ENCODE measurements at regions of chr4 and their contacts with region 1.

Region 1: GRCh38 chr4:2412885-2413716 is 5.3 kb downstream of the ZFYVE28 start:
- DNase-seq: peak; percentile 55 to 94 (median 88)
- ATAC-seq: peak; percentile 74 to 79
- H3K4me3 Mint-ChIP-seq: peak overlapping the region; percentile 69 to 88 (median 82)
- H3K27ac Mint-ChIP-seq: peak overlapping the region; percentile 91 to 99 (median 96)
- H3K4me1 Mint-ChIP-seq: peaks cover 33 to 72% (median 68%) of the 10 kb centered on the region in 4 donors
- H3K27me3 Mint-ChIP-seq: peaks cover 0 to 14% (median 5%) of the 10 kb centered on the region in 5 donors

Region 2: DNA sequence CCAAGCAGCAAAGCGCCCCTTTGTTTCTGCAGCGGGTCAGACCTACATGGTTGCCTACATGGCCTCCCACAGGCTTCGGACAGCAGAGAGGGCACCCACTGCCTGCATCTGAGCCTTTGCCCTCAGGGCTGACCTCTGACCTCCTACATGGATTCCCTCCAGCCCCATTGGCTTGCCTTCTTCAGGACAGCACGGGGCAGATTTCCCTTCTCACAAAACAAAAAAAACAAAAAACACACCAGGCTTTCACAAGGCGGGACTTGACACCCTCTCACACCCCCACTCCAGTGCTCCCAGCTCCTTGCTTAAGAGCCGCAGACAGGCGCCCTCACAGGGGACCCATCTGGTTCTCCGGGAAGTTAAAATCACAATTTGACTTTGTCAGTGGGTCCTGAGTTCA is 27.6 kb before region 1 on chr4:
- POLR2A ChIA-PET with region 1: no interaction called
- DNase-seq: no peak
- ATAC-seq: no peak
- H3K4me3 Mint-ChIP-seq: no peak overlapping the region
- H3K27ac Mint-ChIP-seq: peak overlapping the region in 4 of 10 donors; percentile 61 to 83 (median 66)
- H3K4me1 Mint-ChIP-seq: peaks cover 0 to 12% (median 3%) of the 10 kb centered on the region in 4 donors
- H3K27me3 Mint-ChIP-seq: peaks cover 0 to 20% (median 2%) of the 10 kb centered on the region in 5 donors

Region 3: DNA sequence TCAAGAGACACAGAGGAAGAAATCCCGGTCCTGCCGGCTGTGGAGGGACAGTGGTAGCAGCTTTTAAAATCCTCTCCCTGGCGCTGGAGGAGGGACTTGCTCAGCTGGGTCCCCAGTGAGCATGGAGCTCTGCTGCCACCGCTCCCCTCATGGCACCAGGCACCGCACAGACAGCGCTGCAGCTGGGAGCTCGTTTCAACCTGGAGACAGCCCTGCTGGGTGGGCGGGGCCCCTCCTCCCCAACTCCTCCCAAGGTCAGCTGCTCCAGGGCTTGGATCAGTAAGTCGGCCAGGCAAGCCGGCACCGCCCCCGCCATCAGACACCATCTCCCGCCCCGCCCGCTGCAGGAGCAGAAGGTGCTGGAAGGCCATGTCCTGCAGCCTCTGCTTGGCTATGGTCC is 11.1 kb before region 1 on chr4:
- POLR2A ChIA-PET with region 1: interaction called, 12 read pairs
- DNase-seq: peak in 4 of 10 donors; percentile 15 to 22 (median 17)
- ATAC-seq: peak; percentile 78 to 80
- H3K4me3 Mint-ChIP-seq: peak overlapping the region; percentile 61 to 87 (median 78)
- H3K27ac Mint-ChIP-seq: peak overlapping the region in 6 of 10 donors; percentile 27 to 75 (median 60)
- H3K4me1 Mint-ChIP-seq: peaks cover 17 to 34% (median 25%) of the 10 kb centered on the region in 4 donors
- H3K27me3 Mint-ChIP-seq: peaks cover 0 to 4% (median 2%) of the 10 kb centered on the region in 5 donors

Measured in naive thymus-derived CD8-positive, alpha-beta T cell (primary cell).